Uterus (tissue), 4 donors: ENCODE measurements at regions of chr3 and their contacts with region 1.

Region 1: DNA sequence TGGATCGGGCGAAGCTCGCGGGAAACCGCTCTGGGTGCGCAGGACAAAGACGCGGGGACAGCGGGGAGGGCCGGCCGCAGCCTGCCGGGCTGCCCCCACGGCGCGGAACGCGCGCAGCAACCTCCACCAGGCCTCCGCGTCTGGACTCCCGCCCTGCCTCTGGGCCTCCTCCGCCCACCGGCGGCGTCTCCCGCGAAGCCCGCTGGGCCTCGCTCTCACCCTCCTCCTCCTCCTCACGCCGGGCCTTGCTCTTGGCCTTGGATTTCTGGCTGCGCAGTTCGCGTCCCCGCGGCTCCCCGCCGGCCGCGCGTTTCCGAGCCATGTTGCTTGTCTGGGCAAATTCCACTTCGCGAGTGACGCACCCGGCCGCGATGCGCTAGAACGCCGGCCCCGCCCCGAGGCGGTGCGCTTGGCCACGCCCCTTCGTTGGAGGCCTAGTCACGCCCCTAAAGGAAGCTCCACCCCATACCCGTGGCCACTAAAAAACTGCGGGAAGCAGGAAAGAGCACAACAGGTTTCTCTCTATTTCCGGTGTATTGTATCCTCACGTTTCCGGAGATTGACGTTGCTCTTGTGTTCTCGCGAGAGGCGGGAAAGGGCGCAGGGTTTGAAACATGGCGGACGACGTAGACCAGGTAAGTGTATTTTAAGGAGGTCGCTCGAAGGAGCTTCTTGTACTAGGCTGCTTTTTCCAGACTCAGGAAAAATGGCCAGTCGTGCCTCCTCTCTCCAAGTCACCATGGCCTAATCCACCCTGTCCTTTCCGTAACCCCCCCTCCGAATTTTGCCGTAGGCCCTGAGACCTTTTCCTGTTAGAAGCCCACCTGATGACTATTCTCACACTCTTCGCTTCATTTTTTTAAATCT is at the starts of genes LSM3 and XPC:
- DNase-seq: peak; percentile 98 to 99
- H3K4me3 ChIP-seq: peak within 1 kb of the TSS; percentile 62 to 85
- H3K27ac ChIP-seq: peak within 1 kb of the TSS; percentile 90 to 96
- H3K4me1 ChIP-seq: peaks cover 3 to 5% of the 10 kb centered on the region in 2 donors
- H3K27me3 ChIP-seq: no peaks in the 10 kb centered on the region
- CTCF ChIP-seq: peak in 2 of 4 experiments; percentile 6 to 7
- POLR2A ChIP-seq: peak; percentile 99
- total RNA-seq, gene LSM3: 10.0 to 14.1 (median 11.9) TPM
- total RNA-seq, gene XPC: 15.3 to 85.8 (median 48.5) TPM

Region 2: GRCh38 chr3:14064910-14065309 is 113.6 kb before region 1 on chr3:
- intact Hi-C with region 1: no loop called
- DNase-seq: no peak
- H3K4me3 ChIP-seq: no peak overlapping the region
- H3K27ac ChIP-seq: no peak overlapping the region
- H3K4me1 ChIP-seq: no peaks in the 10 kb centered on the region
- H3K27me3 ChIP-seq: no peaks in the 10 kb centered on the region
- CTCF ChIP-seq: no peak
- POLR2A ChIP-seq: no peak

Region 3: DNA sequence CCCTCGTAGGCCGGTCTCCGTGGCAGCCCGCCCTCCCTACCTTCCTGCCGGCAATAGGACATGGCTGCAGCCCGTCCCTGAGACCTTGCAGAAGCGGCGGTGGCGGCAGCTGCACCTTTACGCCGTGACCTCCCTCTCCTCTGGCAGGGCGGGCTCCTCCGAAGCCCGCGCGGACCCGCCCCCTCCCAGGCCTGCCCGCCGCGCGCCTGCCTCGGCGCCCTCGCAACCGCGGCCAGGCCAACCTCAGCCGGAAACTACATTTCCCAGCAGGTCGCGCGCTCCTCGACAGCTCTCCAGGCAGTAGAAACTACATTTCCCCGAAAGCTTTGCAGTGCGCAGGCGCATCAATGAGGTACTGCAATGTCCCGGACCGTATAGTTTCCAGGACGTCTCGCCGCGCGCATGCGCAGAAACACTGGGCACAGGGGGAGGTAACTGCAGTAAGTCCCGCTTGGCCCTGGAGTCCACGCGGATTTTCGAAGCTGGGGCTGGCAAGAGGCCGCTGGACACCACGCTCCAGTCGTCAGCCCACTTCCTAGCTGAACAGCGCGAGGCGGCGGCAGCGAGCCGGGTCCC is 53.8 kb before region 1 on chr3 and contains the starts of genes CHCHD4 and TMEM43:
- intact Hi-C with region 1: loop called (anchors 10 kb)
- DNase-seq: peak; percentile 99
- H3K4me3 ChIP-seq: peak within 1 kb of the TSS; percentile 72 to 84
- H3K27ac ChIP-seq: peak within 1 kb of the TSS; percentile 87 to 95
- H3K4me1 ChIP-seq: peaks cover 16 to 23% of the 10 kb centered on the region in 2 donors
- H3K27me3 ChIP-seq: no peaks in the 10 kb centered on the region
- CTCF ChIP-seq: peak in 1 of 4 experiments; percentile 24
- POLR2A ChIP-seq: peak; percentile 59 to 83
- total RNA-seq, gene CHCHD4: 6.2 to 12.0 (median 7.8) TPM
- total RNA-seq, gene TMEM43: 93.5 to 114 (median 102) TPM

Region 4: DNA sequence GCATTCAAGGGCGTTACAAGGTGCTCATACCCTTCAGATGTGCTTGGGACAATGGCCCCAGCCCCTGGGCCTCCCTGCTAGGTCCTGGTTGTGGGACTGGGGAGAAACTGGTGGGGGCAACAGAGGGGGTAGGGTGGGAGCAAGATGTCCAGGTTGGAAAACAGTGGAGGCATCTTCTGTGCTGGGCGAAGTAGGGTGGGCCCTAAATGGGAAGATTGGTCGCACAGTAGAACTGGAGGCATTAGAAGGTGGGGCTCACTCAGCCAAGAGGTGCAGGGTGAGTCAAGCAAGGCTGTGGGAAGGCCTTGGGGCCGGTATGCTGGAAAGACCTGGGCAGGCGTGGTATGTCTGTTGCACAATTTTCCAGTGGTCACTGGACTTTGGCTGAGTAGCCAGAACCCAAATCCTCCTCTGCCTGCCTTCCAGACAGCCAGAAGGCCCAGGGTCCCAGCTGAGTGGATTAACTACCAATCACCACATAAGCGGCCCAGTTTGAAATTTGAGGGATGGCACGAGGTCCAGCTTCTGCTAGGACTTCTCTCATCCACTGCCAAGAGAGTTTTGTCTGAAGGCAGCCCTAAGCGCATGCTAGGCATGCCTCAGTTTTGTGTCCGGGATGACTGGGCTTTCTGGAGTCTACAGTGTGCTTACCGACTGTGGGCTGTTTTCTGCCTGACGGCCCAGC is 74.7 kb after region 1 on chr3:
- intact Hi-C with region 1: no loop called
- DNase-seq: peak in 1 of 2 donors; percentile 20
- H3K4me3 ChIP-seq: no peak overlapping the region
- H3K27ac ChIP-seq: no peak overlapping the region
- H3K4me1 ChIP-seq: no peaks in the 10 kb centered on the region
- H3K27me3 ChIP-seq: no peaks in the 10 kb centered on the region
- CTCF ChIP-seq: no peak
- POLR2A ChIP-seq: no peak